T-cell (primary cell): ENCODE measurements at regions of chr9 and their contacts with region 1.

Region 1: DNA sequence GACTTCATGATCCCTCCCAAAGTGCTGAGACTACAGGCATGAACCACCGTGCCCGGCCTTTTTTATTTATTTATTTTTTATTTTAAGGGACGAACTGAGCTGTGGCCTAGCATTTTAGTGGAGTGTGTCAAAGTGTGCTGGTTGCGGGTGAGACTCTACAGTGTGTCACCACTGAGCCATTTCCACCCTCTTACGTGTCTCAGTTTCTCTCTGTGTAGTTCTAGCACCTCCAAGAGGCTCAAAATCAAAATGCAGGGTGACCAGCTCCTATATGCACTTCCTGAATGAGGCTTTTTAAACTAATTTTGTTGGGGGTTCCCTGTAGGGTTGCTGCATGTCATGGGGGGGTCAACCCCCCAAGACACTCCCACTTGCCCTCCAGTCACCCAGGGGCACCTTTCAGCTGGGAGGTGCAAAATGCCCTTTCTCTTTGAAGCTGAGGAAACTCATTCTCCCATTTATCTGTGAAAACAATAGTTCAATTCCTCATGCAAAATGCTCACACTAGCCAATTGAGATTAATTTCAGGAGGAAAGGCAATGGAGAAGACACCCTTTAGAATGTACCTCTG is 69.3 kb downstream of the COL15A1 start:
- DNase-seq: peak in 7 of 35 experiments; percentile 5 to 42 (median 10)
- ATAC-seq: peak in 2 of 4 experiments; percentile 36 to 48
- H3K4me3 ChIP-seq: no peak overlapping the region
- H3K4me3 Mint-ChIP-seq: peak overlapping the region in 2 of 3 donors; percentile 44 to 55
- H3K27ac ChIP-seq: peak overlapping the region; percentile 77
- H3K27ac Mint-ChIP-seq: peak overlapping the region; percentile 91 to 94
- H3K4me1 ChIP-seq: peaks cover 15 to 19% of the 10 kb centered on the region in 2 experiments
- H3K4me1 Mint-ChIP-seq: peaks cover 19 to 27% (median 27%) of the 10 kb centered on the region in 3 donors
- H3K27me3 ChIP-seq: no peaks in the 10 kb centered on the region
- H3K27me3 Mint-ChIP-seq: no peaks in the 10 kb centered on the region

Region 2: DNA sequence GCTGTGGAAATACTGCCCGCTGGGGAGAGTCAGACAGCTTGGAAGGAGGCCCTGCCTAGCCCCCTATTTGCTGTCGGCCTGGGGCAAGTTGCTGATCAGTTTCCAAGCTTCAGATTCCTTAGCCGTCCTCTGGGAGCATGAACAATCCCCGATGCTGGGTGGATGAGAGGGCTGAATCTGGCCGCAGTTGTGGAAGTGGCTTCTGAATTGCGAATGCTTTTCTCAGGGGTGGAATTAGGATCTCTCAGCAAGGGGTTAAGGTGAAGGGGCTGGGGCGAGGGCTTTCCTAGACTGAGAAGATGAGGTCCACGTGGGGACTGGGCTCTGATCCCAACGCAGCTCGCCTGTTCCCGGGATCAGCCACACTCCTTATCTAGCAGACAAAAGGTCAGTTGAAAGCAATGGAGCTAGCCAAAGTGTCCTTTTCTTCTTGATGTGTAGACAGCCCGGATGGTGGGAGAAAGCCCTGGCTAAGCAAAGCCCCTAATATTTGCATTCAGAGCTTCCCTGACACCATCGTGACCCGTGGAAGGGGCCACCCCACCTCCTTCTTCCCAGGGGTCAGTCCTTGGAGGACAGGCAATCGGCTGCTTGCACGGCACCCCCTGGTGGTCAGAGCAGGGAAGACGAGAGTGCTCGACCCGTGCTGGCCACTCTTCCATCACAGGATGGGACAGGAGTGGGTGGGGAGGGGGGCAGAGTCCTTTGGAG is 14.4 kb before region 1 on chr9:
- CTCF ChIA-PET with region 1: interaction called, 9 to 11 read pairs
- POLR2A ChIA-PET with region 1: interaction called in 1 of 2 experiments, 7 read pairs
- DNase-seq: peak in 26 of 35 experiments; percentile 6 to 62 (median 35)
- ATAC-seq: peak in 3 of 4 experiments; percentile 40 to 60 (median 51)
- H3K4me3 ChIP-seq: no peak overlapping the region
- H3K4me3 Mint-ChIP-seq: no peak overlapping the region
- H3K27ac ChIP-seq: no peak overlapping the region
- H3K27ac Mint-ChIP-seq: no peak overlapping the region
- H3K4me1 ChIP-seq: peaks cover 10 to 19% of the 10 kb centered on the region in 2 experiments
- H3K4me1 Mint-ChIP-seq: peaks cover 19 to 22% (median 21%) of the 10 kb centered on the region in 3 donors
- H3K27me3 ChIP-seq: peaks cover 0 to 25% of the 10 kb centered on the region in 2 experiments
- H3K27me3 Mint-ChIP-seq: peaks cover 0 to 7% of the 10 kb centered on the region in 2 donors

Region 3: DNA sequence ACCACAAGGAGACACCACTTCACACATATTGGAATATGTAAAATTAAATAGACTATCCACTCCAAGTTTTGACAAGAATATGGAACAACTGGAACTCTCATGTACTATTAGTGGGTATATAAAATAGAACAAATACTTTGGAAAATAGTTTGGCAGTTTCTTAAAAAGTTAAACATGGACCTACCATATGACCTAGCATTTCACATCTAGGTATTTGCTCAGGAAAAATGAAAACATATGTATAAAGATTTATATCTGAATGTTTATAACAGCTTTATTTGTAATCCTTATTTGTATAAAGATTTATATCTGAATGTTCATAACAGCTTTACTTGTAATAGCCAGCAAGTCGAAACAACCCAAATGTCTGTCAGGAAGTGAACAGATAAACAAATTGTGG is 1036.5 kb after region 1 on chr9:
- CTCF ChIA-PET with region 1: no interaction called
- POLR2A ChIA-PET with region 1: interaction called in 1 of 2 experiments, 11 read pairs
- DNase-seq: no peak
- ATAC-seq: no peak
- H3K4me3 ChIP-seq: no peak overlapping the region
- H3K4me3 Mint-ChIP-seq: no peak overlapping the region
- H3K27ac ChIP-seq: no peak overlapping the region
- H3K27ac Mint-ChIP-seq: no peak overlapping the region
- H3K4me1 ChIP-seq: no peaks in the 10 kb centered on the region
- H3K4me1 Mint-ChIP-seq: peaks cover 23 to 34% (median 24%) of the 10 kb centered on the region in 3 donors
- H3K27me3 ChIP-seq: no peaks in the 10 kb centered on the region
- H3K27me3 Mint-ChIP-seq: no peaks in the 10 kb centered on the region